Dorsolateral prefrontal cortex (tissue), 120 donors: ENCODE measurements at regions of chr11 and their contacts with region 1.

Region 1: DNA sequence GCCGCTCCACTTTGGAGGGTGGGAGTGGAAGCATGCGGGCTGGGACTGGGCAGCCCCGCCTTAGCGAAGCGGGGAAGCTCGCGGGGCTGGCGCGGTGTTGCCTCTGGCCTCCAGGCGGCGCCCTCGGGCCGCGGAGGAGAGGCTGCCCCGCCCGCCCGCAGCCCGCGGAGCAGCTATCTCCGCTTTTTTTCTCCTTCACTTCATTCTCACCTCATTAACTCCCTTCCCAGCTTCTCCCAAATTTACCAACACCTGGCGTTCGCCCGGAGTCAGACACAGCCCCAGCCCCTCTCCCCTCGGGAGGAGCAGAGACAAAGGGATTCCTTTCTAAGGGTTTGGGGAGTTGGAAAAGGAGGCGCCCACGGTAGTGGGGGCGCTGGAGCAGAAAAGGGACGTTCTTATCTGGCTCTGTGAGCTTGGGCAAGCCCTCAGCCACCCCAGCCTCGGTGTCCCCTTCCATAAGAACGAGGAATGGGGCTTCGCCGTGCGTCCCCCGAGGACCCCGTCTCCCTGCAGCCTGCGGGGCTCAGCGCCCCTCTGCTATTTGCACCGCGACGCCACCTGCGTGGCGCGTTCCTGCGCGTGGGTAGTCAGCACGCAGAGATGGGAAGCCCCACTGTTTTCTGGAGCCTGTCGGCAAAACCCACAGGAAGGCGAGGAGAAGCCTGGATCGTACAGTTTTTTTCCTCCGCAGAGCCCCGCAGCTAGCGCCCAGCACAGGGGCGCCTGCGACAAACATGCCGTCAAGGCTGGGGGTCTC is 1.5 kb upstream of the WNT11 start:
- DNase-seq: peak in 9 of 10 donors; percentile 39 to 88 (median 65)
- H3K4me3 ChIP-seq: peak overlapping the region; percentile 47 to 83 (median 66)
- H3K27ac ChIP-seq: peak overlapping the region in 1 of 59 donors; percentile 9
- H3K27me3 ChIP-seq: peaks cover 0 to 33% (median 9%) of the 10 kb centered on the region in 45 donors
- CTCF ChIP-seq: peak; percentile 80 to 99 (median 96)

Region 2: DNA sequence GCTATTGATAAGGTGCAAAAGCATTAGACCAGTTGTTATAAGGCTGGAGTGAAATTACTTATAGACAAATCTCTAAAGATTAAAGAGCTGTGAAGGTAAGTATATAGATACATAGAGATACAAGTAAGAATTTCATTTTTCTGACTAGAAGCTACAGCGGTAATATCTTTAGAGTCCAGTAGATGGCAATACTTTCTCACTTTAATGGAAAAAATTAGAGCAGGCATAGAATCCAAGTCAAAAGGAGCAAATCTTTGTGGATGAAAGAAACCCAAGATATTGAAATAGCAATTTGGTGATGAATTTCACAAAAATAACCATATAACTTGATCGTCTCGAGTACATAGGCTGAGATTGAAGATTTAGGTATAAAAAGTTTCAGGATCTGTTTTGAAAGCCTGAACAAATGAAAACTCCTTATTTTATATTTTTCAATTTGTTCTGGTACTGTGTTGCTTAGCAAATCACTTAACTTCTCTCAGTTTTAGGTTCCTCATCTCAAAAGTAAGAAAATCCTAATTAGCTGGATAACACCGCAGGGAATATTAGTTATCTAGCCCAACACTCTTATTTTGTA is 310.9 kb before region 1 on chr11:
- intact Hi-C with region 1: loop called (anchors 2 to 5 kb)
- DNase-seq: no peak
- H3K4me3 ChIP-seq: no peak overlapping the region
- H3K27ac ChIP-seq: peak overlapping the region in 26 of 59 donors; percentile 1 to 73 (median 43)
- H3K27me3 ChIP-seq: no peaks in the 10 kb centered on the region
- CTCF ChIP-seq: peak; percentile 66 to 96 (median 85)

Region 3: GRCh38 chr11:76135491-76135890 is 72.3 kb before region 1 on chr11:
- intact Hi-C with region 1: no loop called
- DNase-seq: no peak
- H3K4me3 ChIP-seq: no peak overlapping the region
- H3K27ac ChIP-seq: no peak overlapping the region
- H3K27me3 ChIP-seq: no peaks in the 10 kb centered on the region
- CTCF ChIP-seq: no peak

Region 4: GRCh38 chr11:76173663-76174062 is 34.2 kb before region 1 on chr11:
- intact Hi-C with region 1: no loop called
- DNase-seq: no peak
- H3K4me3 ChIP-seq: no peak overlapping the region
- H3K27ac ChIP-seq: no peak overlapping the region
- H3K27me3 ChIP-seq: no peaks in the 10 kb centered on the region
- CTCF ChIP-seq: no peak

Region 5: DNA sequence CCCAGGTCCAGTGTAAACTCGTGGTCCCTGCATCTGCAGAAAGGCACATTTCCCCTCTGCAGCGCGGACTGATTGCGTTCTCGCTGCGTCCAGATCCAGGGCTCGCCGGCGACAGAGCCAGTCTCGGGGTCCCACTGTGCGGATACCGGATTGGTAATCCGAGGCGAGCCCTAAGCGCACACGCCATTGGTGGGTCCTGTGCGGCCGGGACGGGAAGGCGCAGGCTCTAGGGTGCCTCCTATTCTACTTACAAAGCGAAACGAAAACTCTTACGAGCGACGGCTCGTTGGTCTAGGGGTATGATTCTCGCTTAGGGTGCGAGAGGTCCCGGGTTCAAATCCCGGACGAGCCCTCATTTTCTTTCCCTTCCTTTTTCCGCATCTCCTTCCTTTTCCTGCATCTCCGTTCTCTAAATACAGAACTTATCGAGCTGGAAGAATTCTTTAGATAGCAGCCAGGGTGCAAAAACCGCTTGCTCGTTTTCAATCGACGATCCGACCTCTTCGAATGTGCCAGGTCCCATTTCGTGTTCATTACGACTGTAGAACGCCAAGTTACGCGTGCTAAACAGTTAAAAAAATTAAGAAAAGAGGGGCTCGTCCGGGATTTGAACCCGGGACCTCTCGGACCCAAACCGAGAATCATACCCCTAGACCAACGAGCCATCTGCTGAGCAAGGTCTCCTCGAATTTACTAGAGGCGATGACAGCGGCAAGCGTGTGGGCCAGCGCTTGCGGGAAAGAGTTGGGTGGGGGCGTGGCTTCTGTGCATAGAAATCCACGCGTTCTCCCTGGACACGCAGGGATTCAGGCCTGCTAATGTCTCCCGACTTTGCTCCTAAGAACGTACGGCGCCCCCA is 27.6 kb after region 1 on chr11:
- intact Hi-C with region 1: loop called in 1 of 2 experiments (anchors 1 kb)
- DNase-seq: peak; percentile 87 to 97 (median 92)
- H3K4me3 ChIP-seq: peak overlapping the region; percentile 53 to 95 (median 85)
- H3K27ac ChIP-seq: peak overlapping the region; percentile 27 to 98 (median 90)
- H3K27me3 ChIP-seq: no peaks in the 10 kb centered on the region
- CTCF ChIP-seq: peak in 16 of 56 donors; percentile 2 to 33 (median 18)

Region 6: DNA sequence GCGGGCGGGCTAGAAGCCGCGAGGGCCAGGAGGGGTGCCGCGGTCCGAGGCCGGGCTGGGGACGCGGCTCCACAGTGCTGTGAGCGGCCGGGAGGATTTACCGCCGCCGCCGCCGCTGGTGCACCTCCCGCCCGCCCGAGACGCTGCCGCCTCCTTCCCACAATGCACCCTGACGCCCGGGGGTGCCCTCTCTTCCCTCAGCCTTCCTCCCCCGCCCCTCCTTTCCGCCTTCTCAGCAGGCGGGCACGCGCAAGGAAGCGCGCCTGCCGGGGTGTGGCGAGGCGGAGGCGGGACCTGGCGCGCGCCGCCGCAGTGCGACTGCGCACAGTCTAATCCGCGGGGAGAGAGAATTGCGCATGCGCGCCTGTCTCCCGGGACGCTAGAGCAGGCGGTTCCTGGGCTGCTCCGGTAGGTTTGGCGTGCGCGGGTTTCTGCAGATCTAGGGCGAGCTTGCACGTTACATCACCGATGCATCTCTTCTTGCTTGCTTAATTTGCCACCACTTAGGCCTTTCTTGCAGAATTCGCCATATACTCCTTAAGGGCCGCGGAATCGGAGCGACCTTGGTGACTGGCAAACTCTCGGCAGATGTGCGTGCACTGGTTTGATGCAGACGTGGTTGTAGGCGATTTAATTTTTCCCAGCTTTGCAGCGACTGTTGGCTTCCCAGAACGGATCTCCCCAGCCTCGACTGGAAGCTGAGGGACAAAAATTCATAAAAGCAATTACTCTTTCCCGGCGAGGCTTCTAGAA is 173.3 kb after region 1 on chr11 and contains the starts of genes GVQW3 and THAP12:
- intact Hi-C with region 1: loop called in 1 of 2 experiments (anchors 2 kb)
- DNase-seq: peak; percentile 88 to 97 (median 94)
- H3K4me3 ChIP-seq: peak within 1 kb of the TSS; percentile 63 to 99 (median 90)
- H3K27ac ChIP-seq: peak within 1 kb of the TSS in 53 of 59 donors; percentile 12 to 90 (median 77)
- H3K27me3 ChIP-seq: no peaks in the 10 kb centered on the region
- CTCF ChIP-seq: peak in 44 of 56 donors; percentile 6 to 63 (median 30)
- total RNA-seq, gene GVQW3: 10.9 to 28.8 (median 18.6) TPM
- total RNA-seq, gene THAP12: 19.0 to 37.6 (median 26.2) TPM

Region 7: GRCh38 chr11:76680518-76681425 is 472.9 kb after region 1 on chr11:
- intact Hi-C with region 1: loop called in 1 of 2 experiments (anchors 10 kb)
- DNase-seq: peak in 8 of 10 donors; percentile 39 to 74 (median 61)
- H3K4me3 ChIP-seq: peak overlapping the region in 9 of 59 donors; percentile 9 to 46 (median 30)
- H3K27ac ChIP-seq: no peak overlapping the region
- H3K27me3 ChIP-seq: peaks cover 0 to 4% (median 0%) of the 10 kb centered on the region in 45 donors
- CTCF ChIP-seq: peak; percentile 24 to 89 (median 74)